ENCODE measurements at regions of chr10 and their contacts with region 1.

Region 1: GRCh38 chr10:110610308-110610774 is 33.8 kb upstream of the RBM20 start:
- DNase-seq: peak; percentile 35
- H3K4me3 Mint-ChIP-seq: no peak overlapping the region
- H3K27ac Mint-ChIP-seq: no peak overlapping the region
- H3K4me1 Mint-ChIP-seq: peaks cover 44% of the 10 kb centered on the region
- H3K27me3 Mint-ChIP-seq: peaks cover 2% of the 10 kb centered on the region

Region 2: DNA sequence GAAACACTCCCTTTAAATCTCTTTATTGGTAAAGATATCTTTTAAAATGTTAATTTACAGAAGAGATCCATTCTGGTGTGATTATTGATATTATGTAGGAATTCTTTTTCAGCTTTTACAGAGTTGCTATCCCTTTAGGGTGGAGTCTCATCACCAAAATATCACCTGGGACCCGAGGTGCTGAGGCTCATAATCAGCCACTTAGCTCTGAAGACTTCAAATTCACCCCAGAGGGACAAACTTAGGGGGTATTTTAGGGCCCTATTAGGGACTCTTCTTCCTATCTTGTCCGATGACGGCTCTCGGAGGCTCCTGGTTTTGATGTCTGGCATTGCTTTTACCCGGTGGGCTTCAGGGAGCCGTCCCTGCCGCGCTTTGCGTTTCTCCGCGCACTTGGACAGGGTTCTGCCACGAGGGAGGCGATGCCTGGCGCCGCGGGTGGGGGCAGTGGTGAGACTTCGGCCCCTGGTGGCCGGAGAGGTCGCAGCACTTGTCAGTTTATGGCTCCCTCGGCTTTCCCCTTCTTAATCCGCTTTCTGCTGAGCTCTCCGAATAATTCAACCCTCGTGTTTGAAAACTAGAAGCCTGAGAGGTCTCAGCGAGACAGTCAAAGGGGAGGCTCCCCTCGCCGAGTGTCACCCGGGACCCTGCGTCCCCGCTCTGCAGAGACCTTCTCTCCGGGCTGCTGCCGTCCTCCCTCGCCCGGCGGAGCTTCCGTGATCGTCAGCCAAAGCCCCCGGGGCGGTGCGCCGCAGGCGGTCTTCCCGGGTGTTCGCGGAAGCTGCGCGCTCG is 61.6 kb after region 1 on chr10:
- intact Hi-C with region 1: loop called (anchors 1 kb)
- DNase-seq: peak; percentile 44
- H3K4me3 Mint-ChIP-seq: peak overlapping the region; percentile 81
- H3K27ac Mint-ChIP-seq: peak overlapping the region; percentile 36
- H3K4me1 Mint-ChIP-seq: peaks cover 5% of the 10 kb centered on the region
- H3K27me3 Mint-ChIP-seq: peaks cover 54% of the 10 kb centered on the region

Region 3: GRCh38 chr10:110746254-110746826 is 136.0 kb after region 1 on chr10:
- intact Hi-C with region 1: loop called (anchors 1 kb)
- DNase-seq: peak; percentile 19
- H3K4me3 Mint-ChIP-seq: no peak overlapping the region
- H3K27ac Mint-ChIP-seq: no peak overlapping the region
- H3K4me1 Mint-ChIP-seq: peaks cover 55% of the 10 kb centered on the region
- H3K27me3 Mint-ChIP-seq: no peaks in the 10 kb centered on the region

Region 4: DNA sequence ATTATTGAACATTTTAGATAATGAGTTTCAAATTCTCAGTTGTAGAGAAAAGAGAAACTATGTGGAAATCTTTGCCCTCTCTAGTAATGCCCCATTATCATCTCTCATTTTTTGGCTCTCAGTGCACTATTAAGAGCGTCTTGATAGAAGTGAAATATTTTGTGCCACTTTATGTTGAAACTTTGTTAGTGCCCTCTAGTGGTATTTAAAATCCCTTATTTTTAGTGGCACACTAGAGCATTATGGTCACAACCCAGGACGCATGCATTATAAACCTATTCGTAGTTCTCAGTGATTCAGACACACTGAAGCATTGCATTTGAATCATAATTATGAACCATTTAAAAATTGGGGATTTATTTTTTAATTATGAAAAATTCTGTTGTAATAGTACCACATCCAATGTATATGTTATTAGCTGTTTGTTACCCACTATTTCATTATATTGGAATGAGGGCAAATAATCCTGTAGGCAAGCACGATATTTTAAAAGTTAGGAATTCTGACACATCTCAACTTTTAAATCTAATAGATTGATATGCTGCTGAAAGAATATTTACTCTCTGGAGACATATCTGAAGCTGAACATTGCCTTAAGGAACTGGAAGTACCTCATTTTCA is 283.3 kb after region 1 on chr10:
- intact Hi-C with region 1: loop called (anchors 1 kb)
- DNase-seq: no peak
- H3K4me3 Mint-ChIP-seq: no peak overlapping the region
- H3K27ac Mint-ChIP-seq: no peak overlapping the region
- H3K4me1 Mint-ChIP-seq: peaks cover 6% of the 10 kb centered on the region
- H3K27me3 Mint-ChIP-seq: no peaks in the 10 kb centered on the region

Region 5: GRCh38 chr10:111429340-111430028 is 819.1 kb after region 1 on chr10:
- intact Hi-C with region 1: no loop called
- DNase-seq: no peak
- H3K4me3 Mint-ChIP-seq: no peak overlapping the region
- H3K27ac Mint-ChIP-seq: no peak overlapping the region
- H3K4me1 Mint-ChIP-seq: no peaks in the 10 kb centered on the region
- H3K27me3 Mint-ChIP-seq: no peaks in the 10 kb centered on the region

Region 6: DNA sequence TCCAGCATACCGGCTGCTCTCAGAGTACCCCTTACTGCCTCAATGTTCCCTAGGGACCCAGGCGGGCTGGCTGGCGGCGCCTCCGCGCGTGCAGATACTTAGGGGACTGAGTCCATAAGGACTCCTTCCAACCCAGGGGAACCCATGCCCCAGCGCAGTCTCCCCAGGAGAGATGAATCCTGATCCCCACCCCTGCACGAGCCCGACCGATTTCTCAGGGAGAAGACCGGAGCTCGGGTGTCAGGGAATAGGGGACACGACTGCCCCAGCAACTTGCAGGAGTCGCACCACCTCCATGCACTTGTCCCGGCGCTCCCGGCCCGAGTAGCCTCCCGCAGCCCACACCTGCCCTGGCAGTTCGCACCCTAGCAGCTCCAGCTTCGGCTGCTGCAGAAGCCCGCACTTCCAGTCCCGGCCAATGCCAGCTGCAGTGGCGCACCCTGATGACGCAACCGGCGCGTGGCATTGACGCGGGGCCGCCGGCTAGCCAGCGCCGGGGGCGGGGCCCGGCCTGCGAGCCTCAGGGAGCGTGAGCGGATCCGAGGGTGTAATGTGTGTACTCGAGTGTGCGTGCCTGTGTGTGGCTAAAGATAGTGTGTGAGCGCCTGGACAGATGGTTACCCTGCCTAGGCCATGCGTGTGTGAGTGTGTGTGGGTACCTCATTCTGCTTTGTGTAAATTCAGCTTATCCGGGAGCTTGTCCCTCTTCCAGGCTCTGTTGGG is 1573.1 kb after region 1 on chr10 and contains the start of gene GPAM:
- intact Hi-C with region 1: loop called (anchors 5 kb)
- DNase-seq: peak; percentile 98
- H3K4me3 Mint-ChIP-seq: peak within 1 kb of the TSS; percentile 86
- H3K27ac Mint-ChIP-seq: peak within 1 kb of the TSS; percentile 93
- H3K4me1 Mint-ChIP-seq: peaks cover 34% of the 10 kb centered on the region
- H3K27me3 Mint-ChIP-seq: peaks cover 4% of the 10 kb centered on the region
- total RNA-seq, gene GPAM: 10.2 and 10.5 TPM in 2 replicates

Measured in activated T-helper 1 cell treated with anti-CD3 and anti-CD28 coated beads, Interleukin-12 subunit alpha, Interleukin-12 subunit beta, Interleukin-2, Interleukin-4 antibody, amounts not matched to agents 30 ng/mL and 10 ng/mL and 1 ng/mL, durations not matched to agents 14 hours and 24 hours and 36 hours (primary cell).